Panc1 (cell line): ENCODE measurements at regions of chr6 and their contacts with region 1.

Region 1: GRCh38 chr6:71349395-71349794 is 60.8 kb downstream of the OGFRL1 start:
- DNase-seq: no peak
- ATAC-seq: no peak
- H3K4me3 ChIP-seq: no peak overlapping the region
- H3K27ac ChIP-seq: no peak overlapping the region
- H3K4me1 ChIP-seq: no peaks in the 10 kb centered on the region
- H3K27me3 ChIP-seq: no peaks in the 10 kb centered on the region
- CTCF ChIP-seq: peak; percentile 73; the same call in 1 of the 2 replicates

Region 2: GRCh38 chr6:70196531-70196930 is 1152.9 kb before region 1 on chr6:
- CTCF ChIA-PET with region 1: no interaction called
- POLR2A ChIA-PET with region 1: no interaction called
- in situ Hi-C with region 1: no loop called
- intact Hi-C with region 1: no loop called
- DNase-seq: no peak
- ATAC-seq: no peak
- H3K4me3 ChIP-seq: no peak overlapping the region
- H3K27ac ChIP-seq: no peak overlapping the region
- H3K4me1 ChIP-seq: no peaks in the 10 kb centered on the region
- H3K27me3 ChIP-seq: peaks cover 14% of the 10 kb centered on the region
- CTCF ChIP-seq: no peak

Region 3: GRCh38 chr6:71190809-71191208 is 158.6 kb before region 1 on chr6:
- CTCF ChIA-PET with region 1: interaction called, 3 read pairs
- POLR2A ChIA-PET with region 1: no interaction called
- in situ Hi-C with region 1: no loop called
- intact Hi-C with region 1: loop called (anchors 2 kb)
- DNase-seq: no peak
- ATAC-seq: 0 out of 2 replicates have a peak, but pooled peaks have one; percentile 34
- H3K4me3 ChIP-seq: no peak overlapping the region
- H3K27ac ChIP-seq: no peak overlapping the region
- H3K4me1 ChIP-seq: no peaks in the 10 kb centered on the region
- H3K27me3 ChIP-seq: 0 out of 2 replicates have a peak, but pooled peaks cover 2% of the 10 kb centered on the region
- CTCF ChIP-seq: peak; percentile 56; the same call in 1 of the 2 replicates

Region 4: DNA sequence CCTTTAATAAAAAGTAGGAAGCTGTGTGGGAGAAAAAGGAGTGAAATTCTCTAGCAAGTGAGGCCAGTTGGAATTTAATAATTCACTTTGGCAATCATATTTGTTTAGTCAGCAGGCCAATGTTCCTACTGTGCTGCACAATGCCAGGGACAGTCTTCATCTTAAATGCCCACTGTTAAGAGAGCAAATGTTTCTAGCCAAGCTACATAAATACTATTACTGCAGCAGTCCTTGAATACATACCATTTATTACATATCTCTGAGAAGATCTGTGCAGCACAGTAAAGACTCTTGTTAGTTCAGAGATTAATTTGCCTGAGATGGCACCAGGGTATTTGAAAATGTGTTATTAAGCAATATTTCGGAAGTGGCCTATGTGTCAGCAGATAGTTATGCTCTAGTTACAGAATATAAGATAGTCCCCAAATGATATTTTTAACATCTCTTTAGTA is 44.6 kb after region 1 on chr6:
- CTCF ChIA-PET with region 1: no interaction called
- POLR2A ChIA-PET with region 1: interaction called, 14 read pairs
- in situ Hi-C with region 1: no loop called
- intact Hi-C with region 1: no loop called
- DNase-seq: no peak
- ATAC-seq: 0 out of 2 replicates have a peak, but pooled peaks have one; percentile 38
- H3K4me3 ChIP-seq: no peak overlapping the region
- H3K27ac ChIP-seq: peak overlapping the region; percentile 51
- H3K4me1 ChIP-seq: peaks cover 74% of the 10 kb centered on the region
- H3K27me3 ChIP-seq: no peaks in the 10 kb centered on the region
- CTCF ChIP-seq: no peak